ENCODE measurements at regions of chr1 and their contacts with region 1.

Region 1: DNA sequence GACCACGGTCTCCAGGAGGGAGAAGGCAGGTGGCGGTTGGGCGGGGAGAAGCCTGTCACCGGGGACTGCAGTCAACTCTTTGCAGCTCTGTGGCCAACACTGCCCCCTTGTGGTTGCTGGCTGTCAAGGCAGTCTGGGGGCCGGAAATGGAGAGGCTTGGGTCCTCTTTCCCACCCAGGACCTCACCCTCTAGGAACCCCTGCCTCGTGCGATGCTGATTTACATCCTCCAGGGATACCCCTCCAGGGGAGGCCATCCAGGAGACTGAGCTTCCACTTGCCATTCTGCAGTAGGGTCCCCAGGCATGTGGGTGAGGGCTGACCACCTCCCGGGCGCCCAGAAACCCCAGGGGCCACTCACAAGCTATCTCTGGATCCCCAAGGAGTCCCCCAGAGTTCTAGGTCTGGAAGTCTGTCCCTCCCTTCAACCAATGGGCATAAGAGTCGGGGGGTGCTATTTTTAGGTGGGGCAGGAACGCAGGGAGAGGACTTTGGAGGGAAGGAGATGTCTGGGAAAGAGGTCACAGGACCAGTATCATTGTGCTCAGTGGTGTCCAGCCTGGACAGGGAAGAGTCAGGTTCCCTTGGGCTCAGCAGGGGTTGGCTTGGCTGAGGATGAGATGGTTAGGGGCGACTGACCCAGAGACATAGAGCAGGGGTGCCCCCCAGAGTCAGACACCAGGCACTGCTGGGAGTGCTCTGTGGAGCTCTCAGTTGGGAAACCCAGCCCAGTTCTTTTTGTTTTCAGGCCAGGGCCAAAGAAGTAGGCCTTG is 7.1 kb upstream of the GPR61 start:
- DNase-seq: peak; percentile 69 to 81
- ATAC-seq: peak; percentile 51 to 60
- H3K4me3 ChIP-seq: peak overlapping the region in 3 of 4 donors; percentile 18 to 37 (median 34)
- H3K27ac ChIP-seq: peak overlapping the region; percentile 79 to 95 (median 90)
- H3K4me1 ChIP-seq: peaks cover 62 to 70% of the 10 kb centered on the region in 2 donors
- H3K27me3 ChIP-seq: no peaks in the 10 kb centered on the region
- CTCF ChIP-seq: peak; percentile 96 to 99 (median 98)
- POLR2A ChIP-seq: no peak

Region 2: GRCh38 chr1:109213785-109214468 is 318.6 kb before region 1 on chr1 and contains the start of gene SARS1:
- in situ Hi-C with region 1: no loop called
- intact Hi-C with region 1: loop called (anchors 5 kb)
- DNase-seq: peak; percentile 79 to 83
- ATAC-seq: peak; percentile 91 to 92
- H3K4me3 ChIP-seq: peak within 1 kb of the TSS; percentile 80 to 98 (median 87)
- H3K27ac ChIP-seq: peak within 1 kb of the TSS; percentile 89 to 97 (median 94)
- H3K4me1 ChIP-seq: peaks cover 18 to 25% of the 10 kb centered on the region in 2 donors
- H3K27me3 ChIP-seq: no peaks in the 10 kb centered on the region
- CTCF ChIP-seq: no peak
- POLR2A ChIP-seq: peak; percentile 85 to 94
- total RNA-seq, gene SARS1: 97.6 to 116 (median 98.7) TPM

Region 3: GRCh38 chr1:109263597-109264398 is 268.8 kb before region 1 on chr1:
- in situ Hi-C with region 1: no loop called
- intact Hi-C with region 1: loop called (anchors 1 kb)
- DNase-seq: peak; percentile 52 to 76
- ATAC-seq: peak; percentile 59 to 78
- H3K4me3 ChIP-seq: no peak overlapping the region
- H3K27ac ChIP-seq: no peak overlapping the region
- H3K4me1 ChIP-seq: no peaks in the 10 kb centered on the region
- H3K27me3 ChIP-seq: no peaks in the 10 kb centered on the region
- CTCF ChIP-seq: peak; percentile 87 to 98 (median 93)
- POLR2A ChIP-seq: no peak

Region 4: DNA sequence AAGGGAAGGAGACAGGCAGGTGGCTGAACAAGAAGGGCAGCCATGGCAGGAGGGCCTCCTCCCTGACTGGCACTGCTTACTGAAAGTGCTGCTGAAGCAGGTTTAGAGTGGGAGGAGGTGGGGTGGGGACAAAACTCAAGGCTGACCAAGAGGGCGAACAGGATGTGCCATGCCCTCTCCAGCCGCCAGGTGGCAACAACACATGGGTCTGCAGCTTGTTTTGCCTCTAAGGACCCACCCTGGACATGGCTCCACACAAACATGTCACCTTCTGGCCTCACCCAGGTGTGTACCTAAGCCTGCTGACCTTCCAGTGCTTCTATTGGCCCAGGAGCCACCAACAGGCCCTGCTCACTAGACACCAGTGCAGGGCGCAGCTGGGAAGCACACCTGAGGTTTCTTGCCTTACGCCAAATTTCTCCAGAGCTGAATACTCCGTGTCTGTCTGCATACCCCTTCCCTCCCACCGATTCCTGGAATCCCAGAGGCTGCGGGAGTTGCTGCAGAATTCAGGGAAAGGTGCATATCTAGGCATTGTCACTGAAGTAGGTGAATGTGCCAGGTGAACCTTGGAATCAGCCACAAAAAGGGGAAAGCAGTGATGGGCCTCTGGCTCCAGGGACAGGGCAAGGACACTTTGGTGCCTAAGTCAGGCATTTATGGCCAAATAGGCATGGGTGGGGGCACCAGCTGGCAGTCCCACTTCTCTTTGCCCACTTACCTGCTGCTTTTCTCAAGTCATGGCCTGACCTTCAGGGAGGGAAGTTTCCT is 254.9 kb before region 1 on chr1:
- in situ Hi-C with region 1: loop called in 2 of 4 experiments (anchors 10 to 25 kb)
- intact Hi-C with region 1: loop called (anchors 5 kb)
- DNase-seq: peak; percentile 42 to 75
- ATAC-seq: peak in 1 of 2 donors; percentile 53
- H3K4me3 ChIP-seq: no peak overlapping the region
- H3K27ac ChIP-seq: peak overlapping the region in 3 of 4 donors; percentile 21 to 62 (median 50)
- H3K4me1 ChIP-seq: peaks cover 14 to 33% of the 10 kb centered on the region in 2 donors
- H3K27me3 ChIP-seq: no peaks in the 10 kb centered on the region
- CTCF ChIP-seq: peak; percentile 85 to 93 (median 88)
- POLR2A ChIP-seq: no peak

Region 5: GRCh38 chr1:109426278-109427170 is 106.0 kb before region 1 on chr1 and contains the start of gene PSMA5:
- in situ Hi-C with region 1: no loop called
- intact Hi-C with region 1: loop called (anchors 5 kb)
- DNase-seq: peak; percentile 99
- ATAC-seq: peak; percentile 96 to 98
- H3K4me3 ChIP-seq: peak within 1 kb of the TSS; percentile 86 to 90 (median 88)
- H3K27ac ChIP-seq: peak within 1 kb of the TSS; percentile 89 to 97 (median 95)
- H3K4me1 ChIP-seq: peaks cover 35 to 42% of the 10 kb centered on the region in 2 donors
- H3K27me3 ChIP-seq: no peaks in the 10 kb centered on the region
- CTCF ChIP-seq: no peak
- POLR2A ChIP-seq: peak; percentile 94 to 97
- total RNA-seq, gene PSMA5: 63.5 to 82.5 (median 78.2) TPM

Region 6: GRCh38 chr1:109493805-109494539 is 38.6 kb before region 1 on chr1 and contains the start of gene CYB561D1:
- in situ Hi-C with region 1: loop called (anchors 5 kb)
- intact Hi-C with region 1: loop called (anchors 1 kb)
- DNase-seq: peak; percentile 64 to 80
- ATAC-seq: peak; percentile 73 to 85
- H3K4me3 ChIP-seq: peak within 1 kb of the TSS; percentile 82 to 100 (median 97)
- H3K27ac ChIP-seq: peak within 1 kb of the TSS; percentile 62 to 86 (median 83)
- H3K4me1 ChIP-seq: peaks cover 11 to 27% of the 10 kb centered on the region in 2 donors
- H3K27me3 ChIP-seq: no peaks in the 10 kb centered on the region
- CTCF ChIP-seq: peak; percentile 90 to 98 (median 95)
- POLR2A ChIP-seq: peak; percentile 19 to 46
- total RNA-seq, gene CYB561D1: 3.1 to 8.0 (median 3.9) TPM

Region 7: GRCh38 chr1:109499661-109500536 is 32.7 kb before region 1 on chr1:
- in situ Hi-C with region 1: loop called in 2 of 4 experiments (anchors 5 kb)
- intact Hi-C with region 1: loop called (anchors 1 kb)
- DNase-seq: peak in 1 of 2 donors; percentile 59
- ATAC-seq: peak; percentile 34 to 39
- H3K4me3 ChIP-seq: no peak overlapping the region
- H3K27ac ChIP-seq: peak overlapping the region in 2 of 4 donors; percentile 3 to 46
- H3K4me1 ChIP-seq: peaks cover 3 to 4% of the 10 kb centered on the region in 2 donors
- H3K27me3 ChIP-seq: no peaks in the 10 kb centered on the region
- CTCF ChIP-seq: peak in 4 of 5 experiments; percentile 30 to 53 (median 42)
- POLR2A ChIP-seq: no peak

Measured in gastrocnemius medialis (tissue), 4 donors.